Activated CD8-positive, alpha-beta T cell treated with anti-CD3 and anti-CD28 coated beads for 36 hours (primary cell): ENCODE measurements at regions of chr5 and their contacts with region 1.

Region 1: GRCh38 chr5:148791334-148791667 is 35.1 kb upstream of the ADRB2 start:
- DNase-seq: peak; percentile 76
- ATAC-seq: peak; percentile 91
- H3K4me3 Mint-ChIP-seq: no peak overlapping the region
- H3K27ac Mint-ChIP-seq: peak overlapping the region; percentile 39
- H3K4me1 Mint-ChIP-seq: peaks cover 34% of the 10 kb centered on the region
- H3K27me3 Mint-ChIP-seq: peaks cover 36% of the 10 kb centered on the region
- CTCF ChIP-seq: no peak

Region 2: GRCh38 chr5:148805326-148806290 is 14.3 kb after region 1 on chr5:
- CTCF ChIA-PET with region 1: interaction called, 3 read pairs
- POLR2A ChIA-PET with region 1: interaction called, 7 read pairs
- intact Hi-C with region 1: loop called (anchors 1 kb)
- DNase-seq: peak; percentile 78
- ATAC-seq: peak; percentile 45
- H3K4me3 Mint-ChIP-seq: no peak overlapping the region
- H3K27ac Mint-ChIP-seq: peak overlapping the region; percentile 79
- H3K4me1 Mint-ChIP-seq: peaks cover 65% of the 10 kb centered on the region
- H3K27me3 Mint-ChIP-seq: peaks cover 7% of the 10 kb centered on the region
- CTCF ChIP-seq: no peak

Region 3: DNA sequence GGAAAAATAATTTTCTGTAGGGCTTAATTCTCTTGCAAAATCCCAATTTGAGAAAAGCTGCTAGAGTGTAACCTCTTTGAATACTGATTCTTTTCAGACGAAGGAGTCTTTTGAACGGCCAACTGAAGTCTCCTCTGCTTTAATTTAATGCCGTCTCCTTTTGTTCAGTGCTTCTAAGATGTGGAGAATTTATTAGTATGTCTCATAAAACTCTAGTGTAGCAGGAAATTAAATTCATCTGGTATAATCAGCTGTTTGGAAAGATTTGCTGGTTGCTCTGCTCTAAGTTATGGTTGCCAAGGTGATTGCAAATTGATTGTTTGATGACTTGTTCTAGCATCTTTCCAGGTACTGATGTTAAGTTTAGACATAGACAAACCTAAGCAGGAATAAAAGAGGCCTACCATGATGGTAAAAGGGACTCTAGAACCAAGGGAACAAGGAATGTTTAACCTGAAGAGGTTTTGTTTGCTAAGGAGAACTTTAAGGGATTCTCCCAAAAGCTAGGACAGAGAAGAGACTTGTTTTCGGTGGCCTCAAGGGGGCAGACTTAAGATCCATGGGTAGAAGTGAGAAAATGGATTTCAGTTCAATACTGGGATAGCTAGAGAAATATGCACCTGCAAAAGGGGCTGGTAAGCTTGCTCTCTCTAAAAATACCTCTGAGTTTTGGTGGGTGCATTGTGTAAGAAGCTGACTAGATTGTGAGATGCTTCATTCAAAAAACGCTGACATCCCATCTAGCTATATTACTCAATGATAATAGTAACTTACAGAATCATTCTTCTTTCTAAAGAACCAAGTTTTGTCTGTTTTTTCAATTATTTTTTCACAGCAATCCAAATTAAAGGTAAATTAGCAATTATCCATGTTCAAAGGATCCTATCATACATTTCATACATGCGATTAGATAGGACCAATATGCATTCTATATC is 29.4 kb after region 1 on chr5:
- CTCF ChIA-PET with region 1: interaction called, 20 read pairs
- POLR2A ChIA-PET with region 1: interaction called, 9 read pairs
- intact Hi-C with region 1: loop called (anchors 5 kb)
- DNase-seq: no peak
- ATAC-seq: peak; percentile 53
- H3K4me3 Mint-ChIP-seq: no peak overlapping the region
- H3K27ac Mint-ChIP-seq: no peak overlapping the region
- H3K4me1 Mint-ChIP-seq: peaks cover 4% of the 10 kb centered on the region
- H3K27me3 Mint-ChIP-seq: peaks cover 5% of the 10 kb centered on the region
- CTCF ChIP-seq: peak; percentile 65

Region 4: DNA sequence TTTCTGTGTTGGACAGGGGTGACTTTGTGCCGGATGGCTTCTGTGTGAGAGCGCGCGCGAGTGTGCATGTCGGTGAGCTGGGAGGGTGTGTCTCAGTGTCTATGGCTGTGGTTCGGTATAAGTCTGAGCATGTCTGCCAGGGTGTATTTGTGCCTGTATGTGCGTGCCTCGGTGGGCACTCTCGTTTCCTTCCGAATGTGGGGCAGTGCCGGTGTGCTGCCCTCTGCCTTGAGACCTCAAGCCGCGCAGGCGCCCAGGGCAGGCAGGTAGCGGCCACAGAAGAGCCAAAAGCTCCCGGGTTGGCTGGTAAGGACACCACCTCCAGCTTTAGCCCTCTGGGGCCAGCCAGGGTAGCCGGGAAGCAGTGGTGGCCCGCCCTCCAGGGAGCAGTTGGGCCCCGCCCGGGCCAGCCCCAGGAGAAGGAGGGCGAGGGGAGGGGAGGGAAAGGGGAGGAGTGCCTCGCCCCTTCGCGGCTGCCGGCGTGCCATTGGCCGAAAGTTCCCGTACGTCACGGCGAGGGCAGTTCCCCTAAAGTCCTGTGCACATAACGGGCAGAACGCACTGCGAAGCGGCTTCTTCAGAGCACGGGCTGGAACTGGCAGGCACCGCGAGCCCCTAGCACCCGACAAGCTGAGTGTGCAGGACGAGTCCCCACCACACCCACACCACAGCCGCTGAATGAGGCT is 34.9 kb after region 1 on chr5 and contains the start of gene ADRB2:
- CTCF ChIA-PET with region 1: interaction called, 20 read pairs
- POLR2A ChIA-PET with region 1: interaction called, 9 read pairs
- intact Hi-C with region 1: loop called (anchors 5 kb)
- DNase-seq: peak; percentile 92
- ATAC-seq: peak; percentile 94
- H3K4me3 Mint-ChIP-seq: peak within 1 kb of the TSS; percentile 83
- H3K27ac Mint-ChIP-seq: peak within 1 kb of the TSS; percentile 76
- H3K4me1 Mint-ChIP-seq: peaks cover 28% of the 10 kb centered on the region
- H3K27me3 Mint-ChIP-seq: peaks cover 12% of the 10 kb centered on the region
- CTCF ChIP-seq: no peak
- total RNA-seq, gene ADRB2: 0.81 to 0.98 TPM

Region 5: GRCh38 chr5:149172261-149172660 is 381.0 kb after region 1 on chr5:
- CTCF ChIA-PET with region 1: no interaction called
- POLR2A ChIA-PET with region 1: no interaction called
- intact Hi-C with region 1: no loop called
- DNase-seq: peak; percentile 30
- ATAC-seq: no peak
- H3K4me3 Mint-ChIP-seq: no peak overlapping the region
- H3K27ac Mint-ChIP-seq: no peak overlapping the region
- H3K4me1 Mint-ChIP-seq: no peaks in the 10 kb centered on the region
- H3K27me3 Mint-ChIP-seq: peaks cover 16% of the 10 kb centered on the region
- CTCF ChIP-seq: no peak